ENCODE measurements at regions of chr18 and their contacts with region 1.

Region 1: GRCh38 chr18:43572163-43572562 is 294.9 kb upstream of the SYT4 start:
- DNase-seq: no peak
- ATAC-seq: no peak

Region 2: GRCh38 chr18:43486462-43486861 is 85.7 kb before region 1 on chr18:
- intact Hi-C with region 1: no loop called
- DNase-seq: no peak
- ATAC-seq: no peak

Region 3: DNA sequence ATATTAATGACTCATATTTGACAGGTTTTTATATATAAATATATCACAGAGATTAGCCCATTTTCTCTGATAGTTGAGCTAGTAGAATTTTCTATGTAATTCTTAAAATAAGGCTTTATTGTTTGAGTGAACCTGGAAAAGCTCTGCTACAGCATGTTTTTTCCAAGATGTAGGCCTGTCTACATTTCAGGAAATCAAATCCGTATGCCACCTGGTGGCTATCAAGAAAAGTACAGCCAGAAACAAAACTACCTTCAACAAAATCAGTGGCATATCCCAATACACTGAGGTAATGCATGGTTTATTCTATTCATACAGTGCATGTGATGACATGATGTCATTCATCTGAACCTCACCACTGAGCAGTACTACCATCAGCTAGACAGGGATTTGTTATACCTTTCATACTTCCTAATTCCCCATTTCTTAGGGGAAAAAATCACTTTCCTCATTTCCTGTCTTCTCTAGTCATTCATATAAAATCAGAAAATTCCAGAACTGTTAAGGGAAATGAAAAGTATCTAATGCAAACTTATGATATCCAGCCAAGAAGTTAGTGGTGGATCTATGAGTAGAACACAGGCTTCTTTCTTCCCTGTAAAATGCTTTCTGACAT is 15.5 kb after region 1 on chr18:
- intact Hi-C with region 1: loop called (anchors 1 kb)
- DNase-seq: no peak
- ATAC-seq: peak; percentile 60

Region 4: GRCh38 chr18:43634994-43635393 is 62.8 kb after region 1 on chr18:
- intact Hi-C with region 1: no loop called
- DNase-seq: no peak
- ATAC-seq: no peak